Endothelial cell of umbilical vein (primary cell): ENCODE measurements at regions of chr4 and their contacts with region 1.

Region 1: GRCh38 chr4:173153445-173153844 is 15.2 kb upstream of the GALNT7 start:
- DNase-seq: no peak
- H3K4me3 ChIP-seq: no peak overlapping the region
- H3K27ac ChIP-seq: no peak overlapping the region
- H3K4me1 ChIP-seq: peaks cover 4% of the 10 kb centered on the region
- H3K27me3 ChIP-seq: no peaks in the 10 kb centered on the region
- CTCF ChIP-seq: no peak
- POLR2A ChIP-seq: no peak

Region 2: GRCh38 chr4:173111031-173111430 is 42.4 kb before region 1 on chr4:
- CTCF ChIA-PET with region 1: no interaction called
- POLR2A ChIA-PET with region 1: no interaction called
- dilution Hi-C with region 1: no loop called
- intact Hi-C with region 1: no loop called
- DNase-seq: no peak
- H3K4me3 ChIP-seq: no peak overlapping the region
- H3K27ac ChIP-seq: no peak overlapping the region
- H3K4me1 ChIP-seq: peaks cover 12% of the 10 kb centered on the region
- H3K27me3 ChIP-seq: no peaks in the 10 kb centered on the region
- CTCF ChIP-seq: no peak
- POLR2A ChIP-seq: no peak

Region 3: DNA sequence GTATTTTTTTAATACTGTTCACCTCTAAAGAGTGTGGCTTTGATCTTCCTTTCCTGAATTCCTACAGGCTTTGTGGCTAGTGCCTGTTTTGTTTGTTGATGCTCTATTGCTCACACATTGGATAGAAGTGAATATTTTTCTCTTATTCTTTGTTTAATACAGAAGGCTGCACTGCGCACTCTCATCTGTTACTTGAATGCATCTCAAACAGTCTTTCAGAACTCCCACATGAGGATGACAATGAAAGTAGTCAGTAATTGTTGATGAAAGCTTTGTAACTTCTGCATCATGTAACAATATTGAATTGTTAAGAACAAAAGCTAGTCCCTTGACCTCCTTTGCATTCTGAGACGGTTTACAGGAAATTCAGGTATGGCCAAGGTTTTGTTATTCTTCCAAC is 13.9 kb before region 1 on chr4:
- CTCF ChIA-PET with region 1: no interaction called
- POLR2A ChIA-PET with region 1: no interaction called
- dilution Hi-C with region 1: no loop called
- intact Hi-C with region 1: loop called (anchors 1 kb)
- DNase-seq: no peak
- H3K4me3 ChIP-seq: no peak overlapping the region
- H3K27ac ChIP-seq: no peak overlapping the region
- H3K4me1 ChIP-seq: no peaks in the 10 kb centered on the region
- H3K27me3 ChIP-seq: no peaks in the 10 kb centered on the region
- CTCF ChIP-seq: no peak
- POLR2A ChIP-seq: no peak